ENCODE measurements at regions of chr15 and their contacts with region 1.

Region 1: DNA sequence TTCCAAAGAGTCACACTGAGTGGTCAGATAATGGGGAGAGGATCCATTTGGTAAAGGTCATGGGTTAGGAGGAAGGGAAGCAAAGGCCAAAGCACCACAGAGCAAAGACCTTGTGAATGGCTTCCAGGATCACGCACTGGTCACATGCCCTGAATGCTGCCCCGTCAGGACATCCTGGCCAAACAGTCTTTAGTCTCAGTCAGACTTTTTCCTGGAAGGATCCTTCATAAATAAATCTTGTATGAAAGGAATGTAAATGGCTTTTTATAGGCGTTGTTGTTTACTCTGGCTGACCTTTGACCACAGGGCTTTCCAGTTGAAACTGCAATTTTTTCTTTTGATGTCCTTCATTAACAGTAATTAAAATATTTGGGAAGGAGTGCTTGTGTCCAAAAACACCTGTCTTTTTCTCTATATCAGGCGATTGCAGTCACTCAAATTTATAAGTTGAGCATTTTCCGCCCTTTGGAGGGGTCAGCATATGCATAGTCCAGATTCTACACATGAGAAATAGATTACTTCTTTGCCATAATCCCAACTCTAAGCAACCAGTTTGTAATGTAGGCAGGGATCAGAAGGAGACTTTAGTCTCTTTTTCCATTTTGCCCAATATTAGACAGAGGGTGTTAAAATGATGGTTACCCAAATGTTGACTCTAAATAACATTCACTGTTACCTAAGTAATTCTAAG is 48.4 kb downstream of the CHAC1 start:
- DNase-seq: no peak
- ATAC-seq: peak in 3 of 4 donors; percentile 72 to 87 (median 81)
- H3K4me3 ChIP-seq: no peak overlapping the region
- H3K27ac ChIP-seq: no peak overlapping the region
- H3K4me1 ChIP-seq: peaks cover 17% of the 10 kb centered on the region
- H3K27me3 ChIP-seq: no peaks in the 10 kb centered on the region
- CTCF ChIP-seq: no peak

Region 2: GRCh38 chr15:40716165-40716564 is 285.5 kb before region 1 on chr15:
- intact Hi-C with region 1: no loop called
- DNase-seq: no peak
- ATAC-seq: no peak
- H3K4me3 ChIP-seq: no peak overlapping the region
- H3K27ac ChIP-seq: no peak overlapping the region
- H3K4me1 ChIP-seq: no peaks in the 10 kb centered on the region
- H3K27me3 ChIP-seq: no peaks in the 10 kb centered on the region
- CTCF ChIP-seq: no peak

Region 3: DNA sequence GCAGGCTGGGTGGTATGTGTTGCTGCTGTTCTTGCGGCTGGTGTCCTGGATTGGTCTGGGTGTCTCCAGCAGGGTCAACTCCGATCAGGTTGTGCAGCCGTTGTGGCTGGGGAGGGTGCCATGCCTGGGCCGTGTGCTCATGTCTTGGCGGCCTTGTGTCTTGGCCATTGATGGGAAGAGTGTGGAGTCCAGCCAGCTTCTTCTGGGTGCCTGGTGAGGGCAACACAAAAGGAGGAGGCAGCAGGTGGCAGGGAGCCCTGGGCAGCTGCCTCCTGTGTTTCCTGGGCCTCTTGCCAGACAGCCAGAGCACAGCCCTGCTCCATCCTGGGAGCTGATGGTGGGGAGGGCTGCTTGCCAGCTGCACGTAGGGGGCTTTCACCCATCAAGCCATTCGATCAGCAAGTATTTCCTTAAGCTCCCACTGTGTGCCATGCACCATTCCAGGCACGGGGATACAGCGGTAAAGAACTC is 44.1 kb before region 1 on chr15:
- intact Hi-C with region 1: no loop called
- DNase-seq: peak; percentile 81 to 94
- ATAC-seq: peak; percentile 57 to 76 (median 61)
- H3K4me3 ChIP-seq: no peak overlapping the region
- H3K27ac ChIP-seq: peak overlapping the region; percentile 86
- H3K4me1 ChIP-seq: peaks cover 40% of the 10 kb centered on the region
- H3K27me3 ChIP-seq: no peaks in the 10 kb centered on the region
- CTCF ChIP-seq: no peak

Region 4: DNA sequence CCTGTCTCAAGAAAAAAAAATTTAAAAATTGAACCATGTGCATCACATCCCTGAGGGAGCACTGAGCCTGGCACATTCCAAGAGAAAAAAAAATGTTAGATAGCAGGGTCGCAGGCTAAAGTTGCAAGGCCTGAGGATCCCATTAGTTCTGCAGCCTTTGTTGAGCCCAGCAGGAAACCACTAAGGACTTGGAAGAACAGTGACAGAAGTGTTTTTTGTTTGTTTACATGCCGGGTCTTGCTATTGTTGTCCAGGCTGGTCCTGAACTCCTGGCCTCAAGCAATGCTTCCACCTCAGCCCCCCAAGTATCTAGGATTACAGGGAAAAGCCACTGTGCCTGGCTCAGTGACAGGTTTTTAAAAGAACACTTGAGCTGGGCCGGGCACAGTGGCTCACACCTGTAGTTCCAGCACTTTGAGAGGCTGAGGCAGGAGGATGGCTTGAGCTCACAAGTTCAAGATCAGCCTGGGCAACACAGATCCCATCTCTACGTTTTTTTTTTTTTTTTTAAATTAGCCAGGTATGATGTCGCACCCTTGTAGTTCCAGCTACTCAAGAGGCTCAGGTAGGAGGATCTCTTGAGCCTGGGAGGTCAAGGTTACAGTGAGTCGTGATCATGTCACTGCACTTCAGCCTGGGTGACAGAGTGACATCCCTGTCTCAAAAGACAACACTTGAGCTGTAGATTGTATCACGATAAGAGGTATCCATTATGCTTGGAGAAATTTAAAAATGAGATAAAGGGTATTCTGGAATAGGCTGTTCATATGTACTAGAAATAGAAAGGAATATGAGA is 33.2 kb before region 1 on chr15:
- intact Hi-C with region 1: loop called in 1 of 2 experiments (anchors 5 kb)
- DNase-seq: no peak
- ATAC-seq: no peak
- H3K4me3 ChIP-seq: no peak overlapping the region
- H3K27ac ChIP-seq: no peak overlapping the region
- H3K4me1 ChIP-seq: peaks cover 16% of the 10 kb centered on the region
- H3K27me3 ChIP-seq: no peaks in the 10 kb centered on the region
- CTCF ChIP-seq: no peak

Region 5: GRCh38 chr15:41180206-41180789 is 178.6 kb after region 1 on chr15:
- intact Hi-C with region 1: loop called in 1 of 2 experiments (anchors 5 kb)
- DNase-seq: no peak
- ATAC-seq: no peak
- H3K4me3 ChIP-seq: no peak overlapping the region
- H3K27ac ChIP-seq: no peak overlapping the region
- H3K4me1 ChIP-seq: no peaks in the 10 kb centered on the region
- H3K27me3 ChIP-seq: no peaks in the 10 kb centered on the region
- CTCF ChIP-seq: no peak

Region 6: DNA sequence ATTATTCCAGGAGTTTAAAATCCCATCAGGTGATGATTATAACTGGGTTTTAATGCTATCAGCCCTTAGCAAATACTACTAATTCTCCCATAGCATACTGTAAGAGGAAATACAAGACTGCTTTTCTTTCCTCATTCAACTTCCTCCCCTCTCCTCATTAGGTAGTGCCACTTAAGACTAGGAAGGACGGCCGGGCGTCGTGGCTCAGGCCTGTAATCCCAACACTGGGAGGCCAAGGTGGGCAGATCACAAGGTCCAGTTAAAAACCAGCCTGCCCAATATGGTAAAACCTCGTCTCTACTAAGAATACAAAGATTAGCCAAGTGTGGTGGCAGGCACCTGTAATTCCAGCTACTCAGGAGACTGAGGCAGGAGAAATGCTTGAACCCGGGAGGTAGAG is 386.0 kb after region 1 on chr15:
- intact Hi-C with region 1: no loop called
- DNase-seq: no peak
- ATAC-seq: no peak
- H3K4me3 ChIP-seq: no peak overlapping the region
- H3K27ac ChIP-seq: no peak overlapping the region
- H3K4me1 ChIP-seq: no peaks in the 10 kb centered on the region
- H3K27me3 ChIP-seq: no peaks in the 10 kb centered on the region
- CTCF ChIP-seq: no peak